Heart left ventricle (tissue), 16 donors: ENCODE measurements at regions of chr4 and their contacts with region 1.

Region 1: GRCh38 chr4:142719854-142720541 is 126.1 kb downstream of the INPP4B start:
- DNase-seq: no peak
- ATAC-seq: no peak
- H3K4me3 ChIP-seq: no peak overlapping the region
- H3K27ac ChIP-seq: no peak overlapping the region
- H3K4me1 ChIP-seq: peaks cover 0 to 8% (median 0%) of the 10 kb centered on the region in 12 donors
- H3K27me3 ChIP-seq: no peaks in the 10 kb centered on the region
- CTCF ChIP-seq: peak; percentile 24 to 66 (median 48)
- POLR2A ChIP-seq: no peak

Region 2: GRCh38 chr4:142126890-142127497 is 593.0 kb before region 1 on chr4:
- intact Hi-C with region 1: loop called (anchors 5 to 10 kb)
- DNase-seq: peak in 4 of 5 donors; percentile 25 to 57 (median 42)
- ATAC-seq: peak in 3 of 4 donors; percentile 37 to 64 (median 62)
- H3K4me3 ChIP-seq: no peak overlapping the region
- H3K27ac ChIP-seq: no peak overlapping the region
- H3K4me1 ChIP-seq: peaks cover 0 to 42% (median 14%) of the 10 kb centered on the region in 12 donors
- H3K27me3 ChIP-seq: no peaks in the 10 kb centered on the region
- CTCF ChIP-seq: peak; percentile 67 to 97 (median 84)
- POLR2A ChIP-seq: no peak

Region 3: DNA sequence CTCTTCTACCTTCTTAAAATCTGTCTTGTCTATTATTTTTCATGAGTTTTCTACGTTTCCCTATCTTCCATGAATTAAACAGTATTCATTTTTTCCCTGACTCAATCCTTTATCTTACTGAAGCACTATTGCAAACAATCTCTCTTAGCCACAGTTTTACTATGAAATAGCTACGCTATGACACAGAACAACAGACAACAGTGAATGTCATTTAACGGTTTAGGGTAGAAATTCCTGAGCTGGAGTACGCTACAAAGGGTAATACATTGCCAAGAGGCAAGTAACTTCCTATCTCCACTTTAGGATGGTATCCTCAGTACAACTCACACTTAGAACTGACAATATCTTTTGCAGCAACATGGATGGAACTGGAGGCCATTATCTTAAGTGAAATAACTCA is 426.5 kb before region 1 on chr4:
- intact Hi-C with region 1: loop called in 2 of 10 experiments (anchors 10 kb)
- DNase-seq: no peak
- ATAC-seq: no peak
- H3K4me3 ChIP-seq: no peak overlapping the region
- H3K27ac ChIP-seq: no peak overlapping the region
- H3K4me1 ChIP-seq: peaks cover 0 to 11% (median 0%) of the 10 kb centered on the region in 12 donors
- H3K27me3 ChIP-seq: no peaks in the 10 kb centered on the region
- CTCF ChIP-seq: no peak
- POLR2A ChIP-seq: no peak

Region 4: DNA sequence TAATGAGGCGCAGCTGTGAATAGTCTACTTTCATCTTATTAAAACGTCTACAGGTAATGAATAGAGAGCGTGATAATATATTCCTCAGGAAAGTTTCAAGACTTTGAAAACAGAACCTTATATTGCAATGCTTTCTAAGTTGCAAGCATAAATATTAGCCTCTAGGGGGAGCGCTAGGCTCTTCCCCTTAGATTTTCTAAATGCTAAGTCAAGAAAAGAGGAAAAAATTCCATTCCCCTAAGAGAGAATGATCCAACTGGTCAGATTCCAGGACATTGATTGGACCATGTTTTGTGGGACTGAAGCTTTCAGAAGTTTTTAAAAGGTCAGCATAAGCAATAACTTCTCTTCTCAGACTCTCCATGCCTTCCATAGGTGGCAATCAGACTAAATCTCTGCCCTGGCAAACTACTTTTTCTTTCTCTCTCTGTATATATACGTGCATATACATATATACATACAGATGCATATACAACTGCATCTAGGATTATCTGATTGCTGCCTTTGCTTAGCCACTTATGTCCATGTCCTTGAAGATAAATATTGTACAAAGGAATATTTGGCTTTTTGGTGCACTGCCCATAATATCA is 366.8 kb before region 1 on chr4:
- intact Hi-C with region 1: loop called in 8 of 10 experiments (anchors 5 to 10 kb)
- DNase-seq: peak in 1 of 5 donors; percentile 15
- ATAC-seq: peak in 3 of 4 donors; percentile 16 to 64 (median 46)
- H3K4me3 ChIP-seq: no peak overlapping the region
- H3K27ac ChIP-seq: peak overlapping the region in 8 of 12 donors; percentile 8 to 62 (median 47)
- H3K4me1 ChIP-seq: peaks cover under 1 to 76% (median 58%) of the 10 kb centered on the region in 12 donors
- H3K27me3 ChIP-seq: no peaks in the 10 kb centered on the region
- CTCF ChIP-seq: peak; percentile 74 to 97 (median 92)
- POLR2A ChIP-seq: no peak

Region 5: GRCh38 chr4:142539796-142540482 is 180.1 kb before region 1 on chr4:
- intact Hi-C with region 1: no loop called
- DNase-seq: no peak
- ATAC-seq: no peak
- H3K4me3 ChIP-seq: no peak overlapping the region
- H3K27ac ChIP-seq: peak overlapping the region in 1 of 12 donors; percentile 75
- H3K4me1 ChIP-seq: peaks cover 0 to 7% (median 0%) of the 10 kb centered on the region in 12 donors
- H3K27me3 ChIP-seq: no peaks in the 10 kb centered on the region
- CTCF ChIP-seq: no peak
- POLR2A ChIP-seq: no peak

Region 6: GRCh38 chr4:142840516-142841123 is 120.6 kb after region 1 on chr4:
- intact Hi-C with region 1: loop called in 1 of 10 experiments (anchors 10 kb)
- DNase-seq: no peak
- ATAC-seq: no peak
- H3K4me3 ChIP-seq: no peak overlapping the region
- H3K27ac ChIP-seq: no peak overlapping the region
- H3K4me1 ChIP-seq: peaks cover 0 to 15% (median 0%) of the 10 kb centered on the region in 12 donors
- H3K27me3 ChIP-seq: peaks cover 0 to 17% (median 0%) of the 10 kb centered on the region in 9 donors
- CTCF ChIP-seq: peak; percentile 46 to 73 (median 66)
- POLR2A ChIP-seq: no peak

Region 7: GRCh38 chr4:142893012-142893411 is 173.0 kb after region 1 on chr4:
- intact Hi-C with region 1: no loop called
- DNase-seq: no peak
- ATAC-seq: no peak
- H3K4me3 ChIP-seq: no peak overlapping the region
- H3K27ac ChIP-seq: no peak overlapping the region
- H3K4me1 ChIP-seq: no peaks in the 10 kb centered on the region
- H3K27me3 ChIP-seq: no peaks in the 10 kb centered on the region
- CTCF ChIP-seq: no peak
- POLR2A ChIP-seq: no peak